Esophagus muscularis mucosa (tissue), 4 donors: ENCODE measurements at regions of chr1 and their contacts with region 1.

Region 1: GRCh38 chr1:25338188-25338981 is at the start of gene TMEM50A:
- DNase-seq: peak; percentile 97
- H3K4me3 ChIP-seq: peak within 1 kb of the TSS; percentile 71 to 97 (median 84)
- H3K27ac ChIP-seq: peak within 1 kb of the TSS; percentile 93 to 99 (median 96)
- H3K4me1 ChIP-seq: peaks cover 18 to 35% (median 31%) of the 10 kb centered on the region in 4 donors
- H3K27me3 ChIP-seq: no peaks in the 10 kb centered on the region
- CTCF ChIP-seq: no peak
- EP300 ChIP-seq: no peak
- POLR2A ChIP-seq: peak; percentile 56
- total RNA-seq, gene TMEM50A: 85.1 to 106 (median 98.4) TPM

Region 2: DNA sequence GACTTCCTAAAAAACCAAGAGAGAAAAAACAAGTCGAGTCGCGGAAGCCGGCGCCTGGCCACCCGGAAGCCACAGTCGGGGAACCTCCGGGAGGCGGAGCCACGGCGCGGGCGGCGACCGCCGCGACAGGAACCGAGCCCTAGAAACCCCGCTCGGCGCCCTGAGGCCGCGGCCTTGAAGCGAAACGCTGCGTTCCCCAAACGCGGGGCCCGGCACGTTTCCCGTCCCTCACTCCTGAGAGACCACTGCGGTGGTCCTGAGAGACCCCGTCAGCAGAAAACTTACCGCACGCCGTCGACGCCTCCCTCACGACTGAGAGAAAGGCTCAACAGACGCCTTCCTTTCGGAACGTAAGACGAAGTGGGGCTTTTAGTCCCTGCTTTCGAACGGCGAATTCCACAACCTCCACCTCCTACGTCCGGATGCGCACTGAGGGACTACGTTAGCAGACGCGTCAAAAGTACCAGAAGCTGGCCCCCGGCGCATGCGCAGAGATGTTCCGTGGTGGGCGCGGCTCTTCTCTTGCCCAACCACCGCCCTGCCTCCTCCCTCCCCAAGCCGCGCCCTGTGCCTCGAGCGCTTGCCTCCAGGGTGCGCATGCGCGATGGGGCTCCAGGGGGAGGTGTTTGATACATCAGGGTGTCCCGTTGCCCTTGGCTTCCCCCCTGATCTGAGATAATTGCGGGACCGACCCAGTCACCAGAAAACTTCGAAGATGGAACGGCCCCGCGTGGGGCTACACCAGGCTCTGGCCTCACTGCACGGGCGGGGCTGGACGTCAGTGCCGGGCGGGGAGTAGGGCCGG is 91.2 kb before region 1 on chr1 and contains the start of gene RSRP1:
- intact Hi-C with region 1: loop called (anchors 5 kb)
- DNase-seq: peak; percentile 100
- H3K4me3 ChIP-seq: peak within 1 kb of the TSS; percentile 84 to 91 (median 88)
- H3K27ac ChIP-seq: peak within 1 kb of the TSS; percentile 99 to 100 (median 99)
- H3K4me1 ChIP-seq: peaks cover 28 to 42% (median 35%) of the 10 kb centered on the region in 4 donors
- H3K27me3 ChIP-seq: peaks cover 0 to 3% (median 0%) of the 10 kb centered on the region in 4 donors
- CTCF ChIP-seq: peak in 1 of 3 experiments; percentile 13
- EP300 ChIP-seq: no peak
- POLR2A ChIP-seq: peak; percentile 99
- total RNA-seq, gene RSRP1: 33.7 to 75.2 (median 52.5) TPM